Left ventricle myocardium inferior (tissue), 1 donor: ENCODE measurements at regions of chr1 and their contacts with region 1.

Region 1: GRCh38 chr1:26602378-26602959 is 72.9 kb downstream of the RPS6KA1 start:
- DNase-seq: no peak
- H3K4me3 ChIP-seq: no peak overlapping the region
- H3K27ac ChIP-seq: no peak overlapping the region
- H3K4me1 ChIP-seq: peaks cover 4% of the 10 kb centered on the region
- H3K27me3 ChIP-seq: no peaks in the 10 kb centered on the region
- CTCF ChIP-seq: peak; percentile 94

Region 2: DNA sequence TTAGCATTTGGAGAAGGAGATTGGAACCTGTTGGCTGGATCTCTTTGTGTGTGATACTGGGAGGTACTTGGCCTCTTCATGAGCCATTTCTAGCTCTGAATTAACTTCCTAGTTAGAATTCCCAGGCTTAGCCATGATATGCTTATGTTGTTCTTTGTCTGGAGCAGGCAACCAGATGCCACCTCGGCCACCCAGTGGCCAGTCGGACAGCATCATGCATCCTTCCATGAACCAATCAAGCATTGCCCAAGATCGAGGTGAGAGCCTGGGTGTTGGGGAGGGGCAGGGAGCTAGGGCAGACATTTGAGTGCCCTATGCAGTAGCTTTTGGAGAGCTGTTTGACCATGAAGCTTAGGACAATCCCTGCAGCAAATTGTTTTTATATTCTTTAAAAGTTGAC is 158.7 kb after region 1 on chr1:
- intact Hi-C with region 1: no loop called
- DNase-seq: no peak
- H3K4me3 ChIP-seq: no peak overlapping the region
- H3K27ac ChIP-seq: no peak overlapping the region
- H3K4me1 ChIP-seq: peaks cover 22% of the 10 kb centered on the region
- H3K27me3 ChIP-seq: no peaks in the 10 kb centered on the region
- CTCF ChIP-seq: peak; percentile 12

Region 3: DNA sequence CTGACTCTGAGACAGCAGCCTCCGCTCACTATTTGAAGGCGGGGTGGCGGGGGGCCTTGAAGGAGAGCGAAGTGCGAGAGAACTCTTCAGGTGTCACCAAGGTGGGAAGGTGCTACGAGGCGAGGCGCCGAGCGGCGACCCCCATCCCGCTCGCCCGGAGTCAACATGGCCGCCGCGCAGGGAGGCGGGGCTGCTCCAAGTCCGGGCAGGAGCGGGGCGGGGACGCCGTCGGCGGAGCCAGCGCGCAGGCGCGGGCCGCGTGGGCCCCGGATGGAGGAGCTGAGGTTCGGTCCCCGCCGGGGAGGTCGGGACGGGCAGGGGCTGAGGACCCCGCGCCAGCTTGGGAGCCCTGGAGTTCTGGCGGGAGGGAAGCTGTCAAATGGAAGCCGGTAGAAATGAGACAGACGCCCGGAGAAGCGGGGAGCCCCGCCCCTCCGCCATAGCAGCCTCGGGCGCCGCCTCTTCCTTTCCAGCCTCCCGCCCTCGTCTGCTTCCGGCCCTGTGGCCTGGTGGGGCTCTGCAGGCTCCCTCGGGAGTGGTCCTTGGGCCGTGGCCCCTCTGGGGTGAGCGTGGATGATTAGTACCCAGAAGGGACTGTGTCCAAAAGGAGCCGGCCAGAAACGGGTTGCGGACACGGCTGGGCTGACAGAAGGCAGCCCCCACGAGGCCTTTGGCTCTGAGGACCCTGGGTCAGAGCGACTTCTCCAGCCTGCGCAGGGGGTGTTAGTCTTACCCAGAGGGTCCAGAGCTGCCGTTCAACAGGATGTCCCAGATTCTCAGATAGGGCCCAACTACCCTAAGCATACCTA is 185.4 kb after region 1 on chr1 and contains the start of gene PIGV:
- intact Hi-C with region 1: loop called (anchors 2 kb)
- DNase-seq: peak; percentile 89
- H3K4me3 ChIP-seq: peak within 1 kb of the TSS; percentile 86
- H3K27ac ChIP-seq: peak within 1 kb of the TSS; percentile 97
- H3K4me1 ChIP-seq: peaks cover 91% of the 10 kb centered on the region
- H3K27me3 ChIP-seq: no peaks in the 10 kb centered on the region
- CTCF ChIP-seq: peak; percentile 47
- total RNA-seq, gene PIGV: 5.6 TPM

Region 4: DNA sequence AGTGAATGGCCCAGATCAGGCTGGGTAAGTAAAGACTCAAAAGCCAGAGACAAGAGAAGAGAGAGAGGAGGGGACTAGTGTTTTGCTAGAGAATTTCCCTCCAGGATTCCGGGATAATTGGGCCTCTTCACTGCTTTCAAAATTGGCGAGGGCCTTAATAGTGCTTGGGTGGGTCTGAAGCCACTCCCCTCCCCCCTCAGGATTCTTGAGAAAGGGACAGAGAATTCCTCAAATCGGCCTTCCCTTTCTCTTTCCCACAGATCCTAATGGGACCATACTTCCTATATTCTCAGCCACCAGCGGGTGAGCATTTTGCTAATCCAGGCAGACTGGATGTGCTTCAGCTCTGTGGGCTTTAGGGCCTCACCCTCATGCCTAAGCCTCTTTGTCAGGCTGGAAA is 272.4 kb after region 1 on chr1:
- intact Hi-C with region 1: loop called (anchors 10 kb)
- DNase-seq: no peak
- H3K4me3 ChIP-seq: no peak overlapping the region
- H3K27ac ChIP-seq: no peak overlapping the region
- H3K4me1 ChIP-seq: peaks cover 5% of the 10 kb centered on the region
- H3K27me3 ChIP-seq: no peaks in the 10 kb centered on the region
- CTCF ChIP-seq: no peak